Activated CD4-positive, alpha-beta T cell treated with anti-CD3 and anti-CD28 coated beads for 36 hours (primary cell): ENCODE measurements at regions of chr2 and their contacts with region 1.

Region 1: GRCh38 chr2:106193977-106194778 is at the start of gene UXS1:
- DNase-seq: peak; percentile 99
- ATAC-seq: peak; percentile 70
- H3K4me3 Mint-ChIP-seq: peak within 1 kb of the TSS; percentile 84
- H3K27ac Mint-ChIP-seq: peak within 1 kb of the TSS; percentile 91
- H3K4me1 Mint-ChIP-seq: peaks cover 43% of the 10 kb centered on the region
- H3K27me3 Mint-ChIP-seq: peaks cover 2% of the 10 kb centered on the region
- total RNA-seq, gene UXS1: 35.6 to 37.7 TPM

Region 2: GRCh38 chr2:105337124-105338019 is 856.8 kb before region 1 on chr2 and contains the start of gene C2orf49:
- CTCF ChIA-PET with region 1: no interaction called
- POLR2A ChIA-PET with region 1: no interaction called
- intact Hi-C with region 1: loop called in 1 of 2 experiments (anchors 1 kb)
- DNase-seq: peak; percentile 94
- ATAC-seq: peak; percentile 93
- H3K4me3 Mint-ChIP-seq: peak within 1 kb of the TSS; percentile 91
- H3K27ac Mint-ChIP-seq: peak within 1 kb of the TSS; percentile 100
- H3K4me1 Mint-ChIP-seq: peaks cover 27% of the 10 kb centered on the region
- H3K27me3 Mint-ChIP-seq: no peaks in the 10 kb centered on the region
- total RNA-seq, gene C2orf49: 19.3 to 27.8 TPM

Region 3: DNA sequence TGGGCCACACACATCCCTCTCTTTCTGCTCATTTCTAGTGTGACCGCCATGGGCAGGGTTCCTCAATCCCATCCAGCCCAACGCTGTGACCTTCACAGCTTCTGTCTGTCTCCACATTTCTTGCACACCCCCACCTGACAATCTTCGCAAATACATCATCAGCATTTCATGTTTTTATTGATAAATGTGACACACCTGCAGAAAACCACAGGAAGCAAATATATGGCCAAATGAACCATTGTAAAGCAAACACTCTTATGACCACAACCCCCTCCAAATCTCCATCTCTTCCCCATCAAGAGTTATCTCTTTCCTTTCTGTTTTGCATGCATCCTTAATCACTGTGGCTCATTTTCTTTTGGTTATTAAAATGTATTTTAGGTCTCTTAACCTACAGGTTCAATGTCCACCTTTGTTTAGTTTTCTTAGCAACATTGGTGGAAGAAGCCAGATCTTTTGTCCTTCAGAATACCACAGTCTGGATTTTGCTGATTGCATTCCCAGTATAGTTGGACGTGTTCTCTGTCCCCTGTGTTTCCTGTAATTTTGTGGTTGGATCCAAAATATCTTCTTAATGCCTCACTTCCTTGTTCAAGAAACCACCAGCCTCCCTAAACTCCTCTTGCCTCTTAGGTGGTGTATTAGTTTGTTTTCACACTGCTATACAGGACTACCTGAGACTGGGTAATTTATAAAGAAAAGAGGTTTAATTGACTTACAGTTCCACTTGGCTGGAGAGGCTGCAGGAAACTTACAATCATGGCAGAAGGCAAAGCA is 459.2 kb before region 1 on chr2:
- CTCF ChIA-PET with region 1: no interaction called
- POLR2A ChIA-PET with region 1: no interaction called
- intact Hi-C with region 1: loop called in 1 of 2 experiments (anchors 2 kb)
- DNase-seq: no peak
- ATAC-seq: no peak
- H3K4me3 Mint-ChIP-seq: no peak overlapping the region
- H3K27ac Mint-ChIP-seq: no peak overlapping the region
- H3K4me1 Mint-ChIP-seq: peaks cover 52% of the 10 kb centered on the region
- H3K27me3 Mint-ChIP-seq: no peaks in the 10 kb centered on the region

Region 4: DNA sequence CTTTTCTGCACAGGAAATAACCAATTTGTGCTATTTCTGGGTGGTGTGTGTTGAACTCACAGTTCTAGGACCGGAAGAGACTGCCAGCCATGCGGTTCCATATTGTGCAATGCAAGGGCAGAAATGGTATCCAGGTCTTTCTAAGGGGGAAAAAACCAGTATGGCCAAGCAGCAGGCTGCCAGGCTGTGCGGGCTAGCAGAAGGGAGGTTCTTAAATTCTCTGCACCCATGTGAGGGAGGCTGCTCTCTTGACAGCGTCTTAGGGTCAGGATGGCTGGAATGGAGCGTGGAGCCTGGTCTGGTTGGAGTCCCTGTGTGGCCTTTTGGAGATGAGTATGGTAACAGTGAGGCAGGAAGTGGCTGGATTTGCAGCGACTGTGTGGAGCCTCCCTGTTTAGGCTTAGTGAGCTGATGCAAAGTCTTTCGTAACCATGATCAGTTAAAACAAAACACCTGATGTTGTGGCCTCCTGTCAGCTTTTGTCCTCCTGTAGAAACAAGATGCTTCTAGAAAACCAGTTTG is 396.8 kb before region 1 on chr2:
- CTCF ChIA-PET with region 1: no interaction called
- POLR2A ChIA-PET with region 1: no interaction called
- intact Hi-C with region 1: loop called (anchors 2 to 5 kb)
- DNase-seq: peak; percentile 69
- ATAC-seq: peak; percentile 44
- H3K4me3 Mint-ChIP-seq: peak overlapping the region; percentile 64
- H3K27ac Mint-ChIP-seq: peak overlapping the region; percentile 94
- H3K4me1 Mint-ChIP-seq: peaks cover 96% of the 10 kb centered on the region
- H3K27me3 Mint-ChIP-seq: no peaks in the 10 kb centered on the region

Region 5: GRCh38 chr2:106011380-106011779 is 182.8 kb before region 1 on chr2:
- CTCF ChIA-PET with region 1: no interaction called
- POLR2A ChIA-PET with region 1: no interaction called
- intact Hi-C with region 1: no loop called
- DNase-seq: no peak
- ATAC-seq: no peak
- H3K4me3 Mint-ChIP-seq: no peak overlapping the region
- H3K27ac Mint-ChIP-seq: no peak overlapping the region
- H3K4me1 Mint-ChIP-seq: no peaks in the 10 kb centered on the region
- H3K27me3 Mint-ChIP-seq: no peaks in the 10 kb centered on the region

Region 6: GRCh38 chr2:106098081-106098480 is 96.1 kb before region 1 on chr2:
- CTCF ChIA-PET with region 1: interaction called, 3 read pairs
- POLR2A ChIA-PET with region 1: interaction called, 3 read pairs
- intact Hi-C with region 1: loop called (anchors 5 kb)
- DNase-seq: peak; percentile 65
- ATAC-seq: no peak
- H3K4me3 Mint-ChIP-seq: no peak overlapping the region
- H3K27ac Mint-ChIP-seq: no peak overlapping the region
- H3K4me1 Mint-ChIP-seq: peaks cover 41% of the 10 kb centered on the region
- H3K27me3 Mint-ChIP-seq: no peaks in the 10 kb centered on the region

Region 7: GRCh38 chr2:106147159-106147558 is 47.0 kb before region 1 on chr2:
- CTCF ChIA-PET with region 1: interaction called, 4 read pairs
- POLR2A ChIA-PET with region 1: interaction called, 3 read pairs
- intact Hi-C with region 1: loop called (anchors 1 to 10 kb)
- DNase-seq: no peak
- ATAC-seq: no peak
- H3K4me3 Mint-ChIP-seq: no peak overlapping the region
- H3K27ac Mint-ChIP-seq: peak overlapping the region; percentile 52
- H3K4me1 Mint-ChIP-seq: peaks cover 49% of the 10 kb centered on the region
- H3K27me3 Mint-ChIP-seq: no peaks in the 10 kb centered on the region

Region 8: DNA sequence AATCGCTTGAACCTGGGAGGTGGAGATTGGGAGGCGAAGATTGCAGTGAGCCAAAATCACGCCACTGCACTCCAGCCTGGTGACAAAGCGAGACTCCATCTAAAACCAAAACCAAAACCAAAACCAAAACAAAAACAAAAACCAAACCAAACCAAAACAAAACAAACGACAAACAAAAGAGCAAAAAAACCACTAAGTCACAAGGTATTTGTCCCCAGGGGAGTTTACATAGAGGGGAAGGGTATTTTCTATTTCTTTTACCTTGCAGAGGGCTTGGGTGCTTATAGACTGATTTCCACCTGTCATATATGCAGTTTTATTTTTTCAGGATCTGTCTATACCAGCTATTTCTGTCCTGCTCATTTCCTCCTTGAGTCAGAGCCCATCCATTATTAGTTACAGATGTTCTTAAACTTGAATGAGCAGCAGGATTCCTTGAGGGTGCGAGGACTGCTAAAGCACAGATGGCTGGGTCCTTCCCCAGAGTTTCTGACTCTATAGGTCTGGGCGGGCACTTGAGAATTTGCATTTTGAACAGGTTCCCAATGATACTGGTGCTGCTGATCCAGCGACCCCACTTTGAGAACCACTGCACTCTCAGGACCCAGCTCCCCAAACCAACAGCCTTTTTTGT is 102.1 kb after region 1 on chr2:
- CTCF ChIA-PET with region 1: no interaction called
- POLR2A ChIA-PET with region 1: no interaction called
- intact Hi-C with region 1: no loop called
- DNase-seq: no peak
- ATAC-seq: no peak
- H3K4me3 Mint-ChIP-seq: no peak overlapping the region
- H3K27ac Mint-ChIP-seq: no peak overlapping the region
- H3K4me1 Mint-ChIP-seq: no peaks in the 10 kb centered on the region
- H3K27me3 Mint-ChIP-seq: no peaks in the 10 kb centered on the region

Region 9: GRCh38 chr2:106566050-106566449 is 371.9 kb after region 1 on chr2:
- CTCF ChIA-PET with region 1: no interaction called
- POLR2A ChIA-PET with region 1: interaction called, 4 read pairs
- intact Hi-C with region 1: loop called in 1 of 2 experiments (anchors 5 kb)
- DNase-seq: peak; percentile 83
- ATAC-seq: peak; percentile 98
- H3K4me3 Mint-ChIP-seq: no peak overlapping the region
- H3K27ac Mint-ChIP-seq: peak overlapping the region; percentile 78
- H3K4me1 Mint-ChIP-seq: peaks cover 29% of the 10 kb centered on the region
- H3K27me3 Mint-ChIP-seq: peaks cover under 1% of the 10 kb centered on the region